ENCODE measurements at regions of chr18 and their contacts with region 1.

Region 1: DNA sequence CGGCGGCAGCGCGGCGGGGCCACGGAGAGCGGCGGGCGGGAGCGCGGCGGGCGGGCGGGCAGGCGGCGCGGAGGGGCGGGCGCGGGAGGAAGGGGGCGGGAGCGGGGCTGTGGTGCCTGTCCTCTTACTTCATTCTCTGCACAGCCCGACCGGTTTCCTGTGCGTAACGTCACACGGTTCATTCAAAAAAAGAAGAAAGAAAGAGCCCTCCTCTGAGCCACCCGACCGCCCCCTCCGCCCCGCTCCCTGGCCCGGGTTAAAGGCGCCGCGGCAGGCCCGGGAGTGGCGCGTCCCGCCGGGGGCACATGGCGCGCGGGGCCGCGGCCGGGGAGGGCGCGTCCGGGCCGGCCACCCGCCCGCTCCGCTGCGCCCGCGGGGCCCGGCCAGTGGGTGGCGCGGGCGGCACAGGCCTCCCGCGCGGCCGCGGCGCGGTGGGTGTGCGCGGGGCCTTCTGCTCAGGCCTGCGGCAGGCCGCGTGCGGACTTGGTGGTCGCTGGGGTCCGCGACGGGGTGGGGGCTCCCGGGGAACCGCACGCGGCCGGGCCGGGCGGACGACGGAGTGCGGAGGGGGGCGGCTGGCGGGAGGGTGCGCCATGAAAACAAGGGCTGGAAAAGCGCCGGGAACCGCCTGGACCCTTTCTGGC is 599 bp upstream of the BCL2 start:
- DNase-seq: peak; percentile 87
- ATAC-seq: peak; percentile 82

Region 2: DNA sequence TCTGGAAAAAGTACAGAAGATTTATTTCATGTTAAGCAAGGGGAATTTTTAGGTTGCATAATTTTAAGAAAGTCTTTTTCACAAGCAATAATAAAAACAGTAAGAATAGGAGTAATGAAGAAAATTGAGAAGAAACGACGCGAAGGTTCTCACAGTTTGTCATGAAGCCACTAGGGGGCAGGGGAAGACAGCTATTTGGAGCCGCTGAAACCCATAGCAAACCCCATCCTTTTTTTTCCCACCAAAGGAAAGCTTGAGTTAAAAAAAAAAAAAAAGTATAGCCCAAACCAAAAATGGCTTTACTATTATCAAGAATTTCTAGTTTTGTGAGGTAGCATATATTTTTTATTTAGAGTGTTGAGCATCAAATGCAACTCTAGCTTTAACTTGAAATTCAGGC is 303.9 kb before region 1 on chr18:
- intact Hi-C with region 1: loop called (anchors 2 kb)
- DNase-seq: no peak
- ATAC-seq: peak; percentile 50

Region 3: GRCh38 chr18:63131106-63131958 is 188.8 kb before region 1 on chr18:
- intact Hi-C with region 1: loop called (anchors 5 kb)
- DNase-seq: no peak
- ATAC-seq: peak; percentile 77